GM10248 (cell line): ENCODE measurements at regions of chr1 and their contacts with region 1.

Region 1: DNA sequence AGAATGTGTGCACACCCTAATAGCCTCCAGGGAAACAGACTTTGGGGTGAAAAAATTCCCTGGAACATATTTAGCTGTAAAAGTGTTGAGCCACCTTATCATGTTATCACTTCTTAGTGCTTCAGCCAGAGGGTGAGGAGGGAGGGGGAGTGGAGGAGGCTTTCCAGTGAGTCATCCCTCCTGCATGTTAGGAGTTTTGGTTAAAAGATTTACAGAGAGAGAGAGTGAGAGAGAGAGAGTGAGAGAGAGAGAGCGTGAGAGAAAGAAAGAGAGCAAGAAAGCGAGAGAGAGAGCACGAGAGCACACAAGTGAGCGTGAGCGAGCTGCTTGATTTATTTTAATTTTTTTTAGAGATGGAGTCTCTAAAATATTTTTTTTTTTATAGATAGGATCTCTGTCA is 13.5 kb upstream of the CACNA1E start:
- DNase-seq: no peak
- CTCF ChIP-seq: no peak

Region 2: DNA sequence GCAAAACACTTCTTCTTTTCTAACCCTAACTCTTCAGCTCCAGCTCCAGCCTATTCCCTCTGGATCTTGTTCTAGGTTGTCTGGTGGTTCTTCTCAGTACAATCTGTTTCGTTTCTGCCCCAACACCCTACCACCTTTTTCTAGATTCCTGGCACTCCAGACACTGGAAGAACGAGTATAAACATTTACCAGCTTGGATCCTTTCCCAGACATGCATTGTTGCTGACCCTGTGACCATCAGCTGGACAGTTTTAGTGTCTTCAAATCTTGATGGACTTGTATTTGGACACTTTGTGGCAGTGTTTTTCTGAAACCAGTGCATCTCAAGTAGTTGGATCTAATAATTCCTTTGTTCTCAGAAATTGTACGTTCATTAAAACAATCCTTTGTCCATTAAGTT is 17.1 kb before region 1 on chr1:
- CTCF ChIA-PET with region 1: interaction called, 13 read pairs
- POLR2A ChIA-PET with region 1: no interaction called
- DNase-seq: no peak
- CTCF ChIP-seq: no peak

Region 3: DNA sequence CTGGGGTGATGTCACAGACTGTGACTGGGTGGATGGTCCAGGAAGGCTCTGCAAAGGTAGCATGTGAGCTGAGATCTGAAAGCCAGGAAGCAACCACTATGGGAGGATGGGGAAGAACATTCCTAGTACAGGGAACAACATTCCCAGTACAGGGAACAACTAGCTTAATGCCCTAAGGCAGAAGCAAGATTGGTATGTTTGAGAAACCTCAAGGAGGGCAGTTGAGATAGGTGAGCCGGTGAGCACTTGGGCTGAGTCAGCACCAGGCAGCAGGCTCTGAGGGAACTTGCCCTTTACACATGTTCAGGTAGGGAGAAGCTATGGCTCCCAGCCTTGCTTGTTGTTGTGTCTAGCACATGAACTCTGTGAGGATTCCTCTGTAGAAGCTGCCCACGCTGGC is 10.8 kb before region 1 on chr1:
- CTCF ChIA-PET with region 1: interaction called, 107 read pairs
- POLR2A ChIA-PET with region 1: no interaction called
- DNase-seq: no peak
- CTCF ChIP-seq: no peak

Region 4: GRCh38 chr1:181557313-181557712 is 87.5 kb after region 1 on chr1:
- CTCF ChIA-PET with region 1: no interaction called
- POLR2A ChIA-PET with region 1: no interaction called
- DNase-seq: no peak
- CTCF ChIP-seq: no peak